Activated naive CD4-positive, alpha-beta T cell treated with anti-CD3 and anti-CD28 coated beads for 36 hours (primary cell): ENCODE measurements at regions of chr3 and their contacts with region 1.

Region 1: DNA sequence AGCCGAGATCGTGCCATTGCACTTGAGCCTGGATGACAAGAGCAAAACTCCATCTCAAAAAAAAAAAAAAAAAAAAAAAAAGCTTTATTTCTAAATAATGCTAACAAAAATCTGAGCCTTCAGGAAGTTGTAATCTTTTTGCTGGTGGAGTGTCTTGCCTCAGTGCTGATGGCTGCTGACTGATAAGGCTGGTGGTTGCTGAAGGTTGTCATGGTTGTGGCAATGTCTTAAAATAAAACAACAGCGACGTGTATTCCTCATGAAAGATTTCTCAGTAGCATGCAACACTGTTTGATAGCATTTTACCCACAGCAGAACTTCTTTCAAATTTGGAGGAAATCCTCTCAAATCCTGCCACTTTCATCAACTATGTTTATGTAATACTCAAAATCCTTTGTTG is 77.4 kb upstream of the PTPRG start:
- DNase-seq: no peak
- H3K4me3 Mint-ChIP-seq: no peak overlapping the region
- H3K27ac Mint-ChIP-seq: no peak overlapping the region
- H3K4me1 Mint-ChIP-seq: peaks cover 8% of the 10 kb centered on the region
- H3K27me3 Mint-ChIP-seq: no peaks in the 10 kb centered on the region

Region 2: DNA sequence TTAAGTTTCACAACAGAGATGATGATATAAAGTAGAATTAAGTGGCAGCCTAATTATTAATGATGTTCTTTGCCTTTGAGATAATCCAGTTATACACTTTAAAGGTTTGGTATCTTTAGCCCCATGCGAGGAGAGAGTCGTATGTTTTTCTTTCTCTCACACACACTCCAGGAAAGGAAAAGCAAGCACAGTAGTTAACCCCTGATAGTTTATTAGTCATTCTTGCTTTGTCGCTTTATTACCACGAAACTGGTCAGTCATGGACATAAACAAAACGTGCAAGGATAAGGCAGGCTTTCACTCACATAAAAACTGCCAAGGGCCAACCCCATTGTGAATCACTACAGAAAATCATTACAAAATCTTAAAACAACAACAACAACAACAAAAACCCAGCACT is 1099.7 kb before region 1 on chr3:
- CTCF ChIA-PET with region 1: no interaction called
- intact Hi-C with region 1: no loop called
- DNase-seq: no peak
- H3K4me3 Mint-ChIP-seq: no peak overlapping the region
- H3K27ac Mint-ChIP-seq: no peak overlapping the region
- H3K4me1 Mint-ChIP-seq: no peaks in the 10 kb centered on the region
- H3K27me3 Mint-ChIP-seq: no peaks in the 10 kb centered on the region

Region 3: GRCh38 chr3:60909511-60909910 is 574.5 kb before region 1 on chr3:
- CTCF ChIA-PET with region 1: no interaction called
- intact Hi-C with region 1: loop called (anchors 5 kb)
- DNase-seq: no peak
- H3K4me3 Mint-ChIP-seq: no peak overlapping the region
- H3K27ac Mint-ChIP-seq: no peak overlapping the region
- H3K4me1 Mint-ChIP-seq: no peaks in the 10 kb centered on the region
- H3K27me3 Mint-ChIP-seq: no peaks in the 10 kb centered on the region

Region 4: GRCh38 chr3:61452535-61453090 is 31.4 kb before region 1 on chr3:
- CTCF ChIA-PET with region 1: no interaction called
- intact Hi-C with region 1: no loop called
- DNase-seq: no peak
- H3K4me3 Mint-ChIP-seq: no peak overlapping the region
- H3K27ac Mint-ChIP-seq: no peak overlapping the region
- H3K4me1 Mint-ChIP-seq: no peaks in the 10 kb centered on the region
- H3K27me3 Mint-ChIP-seq: peaks cover 14% of the 10 kb centered on the region